HepG2 (cell line): ENCODE measurements at regions of chr1 and their contacts with region 1.

Region 1: DNA sequence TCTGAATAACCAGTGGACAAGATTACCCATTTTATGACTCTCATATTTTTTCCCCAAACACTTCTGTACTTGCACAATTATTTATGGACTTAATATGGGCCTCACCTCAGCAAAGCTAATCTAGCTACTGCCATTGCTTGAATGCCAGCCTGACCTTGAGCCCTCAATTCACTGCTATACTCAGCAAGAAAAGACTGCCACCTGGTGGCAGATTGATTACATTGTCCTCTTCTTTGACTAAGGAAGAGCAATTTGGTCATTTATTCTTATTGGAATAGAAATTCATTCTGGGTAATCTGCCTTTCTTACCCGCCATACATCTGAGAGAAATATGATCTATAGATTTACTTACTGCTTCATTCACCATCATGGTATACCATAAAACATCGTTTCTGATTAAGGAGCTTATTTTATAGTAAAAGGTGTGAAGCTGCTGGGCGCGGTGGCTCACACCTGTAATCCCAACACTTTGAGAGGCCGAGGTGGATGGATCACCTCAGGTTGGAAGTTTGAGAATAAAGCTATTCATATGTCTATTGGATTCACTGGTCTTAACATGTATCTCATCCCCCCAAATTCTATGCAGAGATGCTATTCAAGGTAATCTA is 32.9 kb upstream of the DIPK1A start:
- DNase-seq: peak; percentile 82
- ATAC-seq: peak; percentile 82
- H3K4me3 ChIP-seq: no peak overlapping the region
- H3K27ac ChIP-seq: no peak overlapping the region
- H3K4me1 ChIP-seq: peaks cover 48% of the 10 kb centered on the region
- H3K27me3 ChIP-seq: peaks cover 0 to 3% of the 10 kb centered on the region in 2 experiments; a peak in 2 of 5 replicates
- CTCF ChIP-seq: peak; percentile 86
- EP300 ChIP-seq: no peak
- POLR2A ChIP-seq: no peak
- RAD21 ChIP-seq: peak; percentile 85

Region 2: GRCh38 chr1:92858564-92859399 is 135.4 kb before region 1 on chr1:
- CTCF ChIA-PET with region 1: interaction called, 175 read pairs
- POLR2A ChIA-PET with region 1: no interaction called
- in situ Hi-C with region 1: loop called (anchors 5 kb)
- intact Hi-C with region 1: loop called (anchors 1 kb)
- DNase-seq: peak; percentile 84
- ATAC-seq: peak; percentile 75
- H3K4me3 ChIP-seq: no peak overlapping the region
- H3K27ac ChIP-seq: no peak overlapping the region
- H3K4me1 ChIP-seq: peaks cover 9% of the 10 kb centered on the region
- H3K27me3 ChIP-seq: no peaks in the 10 kb centered on the region
- CTCF ChIP-seq: peak; percentile 91
- EP300 ChIP-seq: 0 out of 4 replicates have a peak, but pooled peaks of 1 of the 2 experiments have one; percentile 3
- POLR2A ChIP-seq: no peak
- RAD21 ChIP-seq: peak; percentile 94

Region 3: GRCh38 chr1:92960395-92961130 is 33.6 kb before region 1 on chr1:
- CTCF ChIA-PET with region 1: interaction called, 11 read pairs
- POLR2A ChIA-PET with region 1: interaction called, 3 read pairs
- in situ Hi-C with region 1: no loop called
- intact Hi-C with region 1: loop called (anchors 1 kb)
- DNase-seq: peak; percentile 81
- ATAC-seq: peak; percentile 85
- H3K4me3 ChIP-seq: peak overlapping the region; percentile 81 to 89 (median 84)
- H3K27ac ChIP-seq: peak overlapping the region; percentile 85
- H3K4me1 ChIP-seq: peaks cover 73% of the 10 kb centered on the region
- H3K27me3 ChIP-seq: peaks cover 2 to 13% of the 10 kb centered on the region in 2 experiments; a peak in 2 of 5 replicates
- CTCF ChIP-seq: peak; percentile 93
- EP300 ChIP-seq: no peak
- POLR2A ChIP-seq: 0 out of 4 replicates have a peak, but pooled peaks have one; percentile 10 to 32
- RAD21 ChIP-seq: peak; percentile 79

Region 4: DNA sequence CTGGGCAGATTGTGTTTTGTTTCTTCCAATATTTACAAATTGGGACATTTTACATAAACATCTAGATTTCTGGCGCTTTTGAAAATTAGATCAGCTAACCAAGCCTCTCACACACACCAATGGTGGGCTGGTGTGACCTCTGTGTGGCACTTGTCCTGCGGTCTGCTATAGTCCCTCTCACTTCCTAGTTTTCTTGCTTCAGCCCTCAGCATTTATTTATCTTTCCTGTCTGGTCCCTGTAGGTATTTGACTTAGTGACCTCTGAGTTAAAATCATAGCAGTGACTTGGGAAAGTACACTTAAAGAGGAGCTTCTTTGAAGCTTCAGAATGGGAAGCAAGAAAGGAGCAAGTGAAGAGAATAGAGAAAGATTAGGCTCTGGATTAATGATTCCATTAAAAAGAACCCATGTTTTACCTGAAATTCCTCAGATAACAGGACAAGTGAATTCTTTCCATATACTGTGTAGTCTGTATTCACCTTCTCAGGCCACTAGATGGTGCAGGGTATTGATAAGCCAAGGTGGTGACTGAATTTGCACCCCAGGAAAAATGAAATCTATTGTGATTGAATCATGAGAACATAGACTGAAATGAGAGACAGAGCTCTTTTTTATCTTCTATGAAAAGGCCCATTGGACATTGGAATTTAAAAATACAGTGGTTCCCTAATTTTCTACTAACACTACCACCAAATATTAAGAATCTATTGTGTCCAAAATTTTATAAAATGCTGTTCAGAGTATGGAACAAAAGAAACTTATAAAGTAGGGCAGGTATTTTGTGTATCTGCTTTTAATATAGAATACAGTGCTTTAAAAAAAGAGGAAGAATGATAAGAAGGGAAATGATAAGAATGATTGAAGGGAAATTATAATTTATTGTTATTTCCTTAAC is 25.8 kb before region 1 on chr1:
- CTCF ChIA-PET with region 1: interaction called, 19 read pairs
- POLR2A ChIA-PET with region 1: no interaction called
- in situ Hi-C with region 1: no loop called
- intact Hi-C with region 1: loop called (anchors 1 kb)
- DNase-seq: peak; percentile 45
- ATAC-seq: peak; percentile 85
- H3K4me3 ChIP-seq: 0 out of 6 replicates have a peak overlapping the region, but pooled peaks of 1 of the 3 experiments have one; percentile 29
- H3K27ac ChIP-seq: no peak overlapping the region
- H3K4me1 ChIP-seq: peaks cover 33% of the 10 kb centered on the region
- H3K27me3 ChIP-seq: peaks cover under 1 to 16% of the 10 kb centered on the region in 2 experiments; a peak in 3 of 5 replicates
- CTCF ChIP-seq: peak; percentile 54
- EP300 ChIP-seq: no peak
- POLR2A ChIP-seq: no peak
- RAD21 ChIP-seq: no peak

Region 5: DNA sequence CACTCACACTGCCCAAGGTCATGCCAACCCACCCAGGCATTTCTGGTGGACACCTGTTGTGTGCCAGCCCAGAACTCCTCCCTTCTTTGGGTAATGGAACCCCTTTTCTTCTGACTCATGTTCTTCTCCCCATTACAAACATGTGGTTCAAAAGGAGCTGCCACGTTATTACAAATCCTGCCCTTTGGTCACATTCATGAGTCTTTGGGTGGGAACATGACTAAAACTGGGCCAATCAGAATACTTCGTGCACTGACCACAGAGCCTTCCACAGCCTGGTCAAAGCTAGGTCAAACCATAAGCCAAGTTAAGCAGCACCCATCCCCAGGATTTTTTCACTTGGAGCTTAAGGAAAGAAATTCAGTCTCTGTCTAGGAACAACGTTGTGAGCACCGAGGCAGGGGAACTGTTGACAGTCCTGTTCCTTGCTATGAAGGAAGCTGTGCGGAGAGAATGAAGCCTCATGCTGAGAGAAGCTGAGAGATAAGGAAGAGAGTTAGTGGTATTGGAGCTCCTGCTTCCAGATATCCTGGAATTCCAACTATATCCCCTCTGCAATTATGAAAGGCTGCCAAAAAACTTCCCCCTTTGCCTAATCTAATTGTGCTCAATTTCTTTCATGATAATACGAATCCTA is 13.8 kb after region 1 on chr1:
- CTCF ChIA-PET with region 1: no interaction called
- POLR2A ChIA-PET with region 1: no interaction called
- in situ Hi-C with region 1: no loop called
- intact Hi-C with region 1: no loop called
- DNase-seq: no peak
- ATAC-seq: no peak
- H3K4me3 ChIP-seq: no peak overlapping the region
- H3K27ac ChIP-seq: no peak overlapping the region
- H3K4me1 ChIP-seq: 0 out of 2 replicates have a peak, but pooled peaks cover 5% of the 10 kb centered on the region
- H3K27me3 ChIP-seq: peaks cover 0 to 8% of the 10 kb centered on the region in 2 experiments; a peak in 1 of 5 replicates
- CTCF ChIP-seq: no peak
- EP300 ChIP-seq: no peak
- POLR2A ChIP-seq: no peak
- RAD21 ChIP-seq: no peak

Region 6: DNA sequence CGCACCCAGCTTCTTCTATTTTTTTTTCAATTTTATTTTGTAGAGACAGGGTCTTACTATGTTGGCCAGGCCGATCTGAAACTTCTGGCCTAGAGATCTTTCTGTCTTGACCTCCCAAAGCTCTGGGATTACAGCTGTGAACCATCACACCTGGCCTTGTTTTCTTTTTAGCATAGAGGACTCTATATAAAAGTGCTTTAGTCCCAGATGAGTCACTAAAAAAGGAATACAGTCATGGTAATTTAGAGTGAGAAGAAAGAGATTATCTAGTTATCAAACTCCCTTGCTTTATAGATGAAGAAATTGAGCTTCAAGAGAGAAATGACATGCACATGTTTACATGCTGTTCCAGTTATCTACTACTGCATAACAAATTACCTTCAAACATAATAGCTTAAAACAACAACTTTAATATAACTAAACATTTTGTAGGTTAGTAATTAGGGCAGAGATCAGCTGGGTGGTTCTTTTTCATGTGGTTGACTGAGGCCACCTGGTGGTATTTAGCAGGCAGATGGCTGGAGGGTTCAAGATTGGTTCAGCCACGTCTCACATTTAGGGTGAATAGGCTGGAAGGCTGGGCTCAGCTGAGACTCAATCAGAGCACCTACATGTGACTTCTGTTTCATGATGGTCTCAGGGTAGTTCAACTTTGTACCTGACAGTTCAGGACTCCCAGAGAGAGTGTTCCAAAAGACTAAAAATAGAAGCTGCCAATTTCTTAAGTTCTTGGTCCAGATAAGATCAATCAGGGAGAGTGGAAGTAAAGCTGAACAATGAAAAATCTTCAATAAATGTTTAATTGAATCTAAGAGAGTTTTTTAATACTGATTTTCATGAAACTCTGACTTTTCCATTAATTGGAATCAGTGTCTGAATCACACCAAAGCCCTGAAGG is 67.9 kb after region 1 on chr1:
- CTCF ChIA-PET with region 1: no interaction called
- POLR2A ChIA-PET with region 1: no interaction called
- in situ Hi-C with region 1: no loop called
- intact Hi-C with region 1: loop called (anchors 1 kb)
- DNase-seq: peak; percentile 54
- ATAC-seq: peak; percentile 88
- H3K4me3 ChIP-seq: no peak overlapping the region
- H3K27ac ChIP-seq: no peak overlapping the region
- H3K4me1 ChIP-seq: no peaks in the 10 kb centered on the region
- H3K27me3 ChIP-seq: no peaks in the 10 kb centered on the region; a peak in 1 of 5 replicates
- CTCF ChIP-seq: peak; percentile 82
- EP300 ChIP-seq: no peak
- POLR2A ChIP-seq: no peak
- RAD21 ChIP-seq: peak; percentile 72